Heart left ventricle (tissue), 16 donors: ENCODE measurements at regions of chr12 and their contacts with region 1.

Region 1: DNA sequence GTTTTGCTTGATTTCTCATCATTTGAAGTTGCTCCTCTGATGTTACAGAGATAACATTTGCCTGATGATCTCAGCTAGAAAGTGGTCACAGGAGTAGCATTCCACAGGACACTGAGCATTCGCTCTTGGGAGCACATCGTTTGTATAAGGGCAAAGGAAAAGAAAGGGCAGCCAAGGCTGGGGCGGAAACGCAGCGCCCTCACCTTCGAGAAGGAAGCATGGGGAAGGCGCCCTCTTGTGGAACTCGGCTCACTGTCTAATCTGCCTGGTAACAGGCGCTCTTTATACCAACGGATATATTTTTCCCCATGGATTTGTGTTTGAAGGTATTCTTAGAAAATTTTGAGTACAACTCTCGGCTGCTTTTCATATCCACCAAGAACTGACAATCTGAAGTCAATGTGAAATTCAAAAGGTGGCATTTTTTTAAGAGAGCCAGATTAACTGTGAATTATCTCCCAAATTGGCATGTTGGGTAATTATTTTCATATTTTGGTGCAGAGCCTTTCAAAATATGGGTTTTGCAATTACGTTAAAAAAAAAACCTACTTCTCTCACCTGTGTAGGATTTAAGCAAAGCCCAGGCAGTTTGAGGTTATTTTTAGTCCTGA is 172.7 kb downstream of the CAND1 start:
- DNase-seq: peak; percentile 85 to 92 (median 87)
- ATAC-seq: peak; percentile 94 to 98 (median 96)
- H3K4me3 ChIP-seq: peak overlapping the region in 6 of 12 donors; percentile 3 to 49 (median 23)
- H3K27ac ChIP-seq: peak overlapping the region in 11 of 12 donors; percentile 3 to 52 (median 33)
- H3K4me1 ChIP-seq: peaks cover 0 to 18% (median 11%) of the 10 kb centered on the region in 12 donors
- H3K27me3 ChIP-seq: no peaks in the 10 kb centered on the region
- CTCF ChIP-seq: peak; percentile 67 to 92 (median 84)
- POLR2A ChIP-seq: no peak

Region 2: GRCh38 chr12:67137256-67137655 is 304.6 kb before region 1 on chr12:
- intact Hi-C with region 1: no loop called
- DNase-seq: no peak
- ATAC-seq: no peak
- H3K4me3 ChIP-seq: no peak overlapping the region
- H3K27ac ChIP-seq: no peak overlapping the region
- H3K4me1 ChIP-seq: no peaks in the 10 kb centered on the region
- H3K27me3 ChIP-seq: no peaks in the 10 kb centered on the region
- CTCF ChIP-seq: no peak
- POLR2A ChIP-seq: no peak

Region 3: GRCh38 chr12:67837876-67838275 is 396.0 kb after region 1 on chr12:
- intact Hi-C with region 1: loop called in 1 of 10 experiments (anchors 10 kb)
- DNase-seq: no peak
- ATAC-seq: no peak
- H3K4me3 ChIP-seq: no peak overlapping the region
- H3K27ac ChIP-seq: no peak overlapping the region
- H3K4me1 ChIP-seq: peaks cover 0 to 3% (median 0%) of the 10 kb centered on the region in 12 donors
- H3K27me3 ChIP-seq: no peaks in the 10 kb centered on the region
- CTCF ChIP-seq: no peak
- POLR2A ChIP-seq: no peak